GM12878 (cell line): ENCODE measurements at regions of chr14 and their contacts with region 1.

Region 1: GRCh38 chr14:93073910-93074769 is 41.6 kb downstream of the ITPK1 start:
- DNase-seq: no peak
- ATAC-seq: peak; percentile 57
- H3K4me3 ChIP-seq: peak overlapping the region; percentile 17; the same call in 1 of the 2 replicates
- H3K27ac ChIP-seq: peak overlapping the region; percentile 81
- H3K4me1 ChIP-seq: peaks cover 33% of the 10 kb centered on the region
- H3K27me3 ChIP-seq: no peaks in the 10 kb centered on the region
- CTCF ChIP-seq: no peak
- EP300 ChIP-seq: no peak
- POLR2A ChIP-seq: peak; percentile 54
- RAD21 ChIP-seq: no peak

Region 2: DNA sequence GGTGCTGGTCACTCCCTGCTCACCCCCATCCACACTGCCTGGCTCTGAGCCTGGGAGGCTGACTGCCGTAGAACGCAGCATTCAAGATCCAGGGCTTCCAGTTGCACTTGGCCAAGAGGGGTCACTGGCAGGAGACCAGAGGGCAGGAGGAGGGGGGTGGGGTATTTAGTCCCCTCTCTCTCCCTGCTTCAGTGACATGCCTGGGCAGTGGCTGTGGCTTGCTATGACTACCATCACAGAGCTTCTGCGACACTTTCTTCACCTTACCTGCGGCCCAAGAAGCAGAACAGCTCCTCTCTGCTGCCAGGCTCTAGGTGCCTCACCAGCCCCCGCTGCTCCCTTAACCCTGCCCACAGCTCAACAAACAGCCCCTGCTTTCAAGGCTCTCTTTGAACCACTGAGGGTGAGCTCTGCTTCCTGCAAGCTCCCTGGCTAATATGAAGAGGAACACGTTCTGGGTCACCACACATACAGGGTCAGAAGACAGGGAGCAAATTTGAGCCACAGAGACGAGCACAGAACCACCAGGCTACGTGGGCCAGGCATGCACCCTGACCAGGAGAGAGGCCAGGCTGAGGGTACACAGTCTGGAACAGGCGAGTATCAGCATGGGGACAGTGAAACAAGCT is 14.1 kb before region 1 on chr14:
- CTCF ChIA-PET with region 1: interaction called, 36 read pairs
- POLR2A ChIA-PET with region 1: interaction called, 25 read pairs
- RAD21 ChIA-PET with region 1: interaction called, 41 read pairs
- SMC1A ChIA-PET with region 1: interaction called, 27 read pairs
- in situ Hi-C with region 1: no loop called
- intact Hi-C with region 1: no loop called
- DNase-seq: no peak
- ATAC-seq: peak; percentile 76
- H3K4me3 ChIP-seq: no peak overlapping the region
- H3K27ac ChIP-seq: peak overlapping the region; percentile 78
- H3K4me1 ChIP-seq: peaks cover 46% of the 10 kb centered on the region
- H3K27me3 ChIP-seq: no peaks in the 10 kb centered on the region
- CTCF ChIP-seq: no peak
- EP300 ChIP-seq: no peak
- POLR2A ChIP-seq: no peak; the same call in 1 of the 2 replicates
- RAD21 ChIP-seq: no peak